ENCODE measurements at regions of chr20 and their contacts with region 1.

Region 1: DNA sequence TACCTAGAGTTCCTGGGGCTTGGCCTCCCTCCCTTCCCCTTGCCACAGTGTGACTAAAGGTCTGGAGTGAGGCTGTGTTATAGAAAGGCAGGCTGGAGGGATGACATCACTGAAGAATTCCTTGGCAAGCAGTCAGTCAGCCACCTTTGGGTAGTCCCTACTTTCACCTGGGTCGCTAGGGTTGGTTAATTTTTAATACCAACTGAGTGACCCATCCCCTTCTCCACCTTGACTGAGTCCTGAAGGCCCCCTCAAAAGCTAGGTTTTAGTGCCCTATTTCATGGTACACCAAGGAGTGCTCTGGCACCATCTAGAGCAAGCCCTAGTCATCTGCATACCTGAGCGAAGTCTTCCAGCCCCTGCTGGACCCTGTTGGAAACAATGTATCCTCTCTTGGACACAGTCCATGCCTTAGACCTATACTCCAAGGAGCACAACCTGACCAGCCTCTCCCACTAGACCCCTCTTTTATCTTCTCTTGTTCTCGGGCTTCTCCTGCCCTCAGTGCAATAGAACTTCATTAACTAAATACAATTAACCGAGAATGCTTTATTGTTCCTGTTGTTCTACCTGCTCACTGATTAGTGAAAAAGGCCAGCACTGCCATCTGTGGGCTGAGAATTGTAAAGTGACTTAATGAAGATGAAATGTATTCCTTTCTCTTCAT is 44.6 kb downstream of the RIN2 start:
- DNase-seq: peak; percentile 78 to 82
- H3K4me3 ChIP-seq: no peak overlapping the region
- H3K4me3 Mint-ChIP-seq: no peak overlapping the region
- H3K27ac Mint-ChIP-seq: peak overlapping the region; percentile 14
- H3K4me1 ChIP-seq: peaks cover 27% of the 10 kb centered on the region
- H3K4me1 Mint-ChIP-seq: peaks cover 25% of the 10 kb centered on the region
- H3K27me3 ChIP-seq: no peaks in the 10 kb centered on the region
- H3K27me3 Mint-ChIP-seq: no peaks in the 10 kb centered on the region
- CTCF ChIP-seq: peak; percentile 80 to 90

Region 2: DNA sequence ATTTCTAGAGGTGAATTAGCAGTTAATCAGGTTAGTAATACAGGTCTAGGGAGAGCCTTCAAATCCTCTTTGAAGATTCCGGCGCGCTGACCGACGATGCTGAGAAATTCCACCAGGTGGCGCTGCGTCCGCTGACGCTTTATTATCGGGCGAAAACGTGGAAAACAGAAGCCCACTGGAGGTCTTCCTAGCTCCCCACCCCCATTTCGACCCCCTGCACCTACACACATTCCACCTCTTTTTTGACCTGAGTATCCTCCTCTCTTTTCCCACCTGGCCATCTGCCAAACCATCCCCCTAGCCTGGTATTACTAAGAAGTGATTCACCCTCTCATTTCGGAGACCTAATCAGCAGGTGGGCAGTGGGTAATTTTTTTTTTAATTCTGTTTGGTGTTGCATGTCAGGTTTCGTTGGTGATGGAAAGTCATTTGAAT is 109.9 kb before region 1 on chr20:
- CTCF ChIA-PET with region 1: interaction called, 11 read pairs
- POLR2A ChIA-PET with region 1: no interaction called
- intact Hi-C with region 1: loop called (anchors 1 kb)
- DNase-seq: peak; percentile 55 to 73
- H3K4me3 ChIP-seq: no peak overlapping the region
- H3K4me3 Mint-ChIP-seq: peak overlapping the region; percentile 27
- H3K27ac Mint-ChIP-seq: no peak overlapping the region
- H3K4me1 ChIP-seq: 0 out of 2 replicates have a peak, but pooled peaks cover 8% of the 10 kb centered on the region
- H3K4me1 Mint-ChIP-seq: peaks cover 15% of the 10 kb centered on the region
- H3K27me3 ChIP-seq: no peaks in the 10 kb centered on the region
- H3K27me3 Mint-ChIP-seq: no peaks in the 10 kb centered on the region
- CTCF ChIP-seq: peak; percentile 90

Measured in Caco-2 (cell line).